ENCODE measurements at regions of chr2 and their contacts with region 1.

Region 1: GRCh38 chr2:231612179-231613053 is 19.8 kb downstream of the TEX44 start:
- DNase-seq: peak; percentile 89

Region 2: GRCh38 chr2:231452799-231453508 is 159.5 kb before region 1 on chr2:
- CTCF ChIA-PET with region 1: no interaction called
- POLR2A ChIA-PET with region 1: no interaction called
- DNase-seq: no peak

Region 3: GRCh38 chr2:231557571-231558237 is 54.7 kb before region 1 on chr2:
- CTCF ChIA-PET with region 1: no interaction called
- POLR2A ChIA-PET with region 1: no interaction called
- DNase-seq: peak; percentile 86

Region 4: DNA sequence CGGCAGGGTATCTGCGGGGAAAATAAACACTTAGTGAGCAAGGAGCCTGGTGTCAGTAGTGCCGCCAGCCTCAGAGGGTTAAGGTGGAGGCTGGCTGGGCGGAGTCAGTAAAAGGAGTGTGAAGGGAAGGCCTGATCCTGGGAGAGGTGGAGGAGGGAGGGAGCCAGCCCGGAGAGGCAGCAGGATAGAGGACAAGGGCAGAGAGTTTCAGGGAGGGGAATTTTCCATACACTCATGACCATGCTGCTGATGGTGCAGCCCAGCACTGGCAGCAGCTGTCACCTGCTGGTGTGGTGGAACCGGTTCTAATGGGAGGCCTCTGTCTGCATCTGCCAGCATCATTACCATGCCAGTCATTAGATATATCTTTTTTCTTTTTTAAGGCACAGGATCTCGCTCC is 21.8 kb before region 1 on chr2:
- CTCF ChIA-PET with region 1: no interaction called
- POLR2A ChIA-PET with region 1: no interaction called
- DNase-seq: no peak

Region 5: GRCh38 chr2:231601349-231602229 is 10.8 kb before region 1 on chr2:
- CTCF ChIA-PET with region 1: interaction called, 11 read pairs
- POLR2A ChIA-PET with region 1: interaction called, 9 read pairs
- DNase-seq: peak; percentile 77

Region 6: DNA sequence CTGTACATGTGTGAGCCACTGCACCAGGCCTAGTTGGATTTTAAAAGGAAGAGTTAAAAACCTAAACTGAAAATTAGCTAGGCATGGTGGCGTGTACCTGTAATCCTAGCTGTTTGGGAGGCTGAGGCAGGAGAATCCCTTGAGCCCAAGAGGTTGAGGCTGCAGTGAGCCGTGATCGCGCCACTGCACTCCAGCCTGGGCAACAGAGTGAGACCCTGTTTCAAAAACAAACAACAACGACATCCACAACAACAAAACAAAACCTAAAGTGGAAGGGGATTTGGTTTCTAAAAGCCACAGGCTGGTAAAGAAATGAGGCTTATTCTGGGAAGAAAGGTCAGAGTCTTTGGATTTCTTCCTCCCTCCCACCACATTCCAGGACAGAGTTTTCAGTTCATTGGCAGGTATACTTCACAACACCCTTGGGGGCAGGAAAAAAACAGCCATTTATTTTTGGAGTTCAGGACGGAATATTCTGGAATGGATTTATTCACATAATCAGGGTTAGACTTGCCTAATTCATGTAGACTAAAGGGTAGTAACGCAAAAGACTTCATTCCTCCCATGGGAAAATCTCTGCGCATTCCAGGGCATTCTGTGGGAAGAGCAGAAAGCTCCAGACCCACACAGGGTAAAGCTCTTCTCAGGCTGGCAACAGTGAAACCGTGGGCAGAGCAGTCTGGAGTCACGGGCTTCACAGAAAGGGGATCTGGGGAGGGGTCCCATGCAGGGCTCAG is 15.1 kb after region 1 on chr2:
- CTCF ChIA-PET with region 1: interaction called, 4 read pairs
- POLR2A ChIA-PET with region 1: interaction called, 16 read pairs
- DNase-seq: no peak

Region 7: GRCh38 chr2:231642631-231643494 is 30.4 kb after region 1 on chr2:
- CTCF ChIA-PET with region 1: no interaction called
- POLR2A ChIA-PET with region 1: interaction called, 10 read pairs
- DNase-seq: peak; percentile 46

Region 8: GRCh38 chr2:231674587-231675338 is 62.3 kb after region 1 on chr2:
- CTCF ChIA-PET with region 1: interaction called, 37 read pairs
- POLR2A ChIA-PET with region 1: interaction called, 44 read pairs
- DNase-seq: peak; percentile 56

Region 9: DNA sequence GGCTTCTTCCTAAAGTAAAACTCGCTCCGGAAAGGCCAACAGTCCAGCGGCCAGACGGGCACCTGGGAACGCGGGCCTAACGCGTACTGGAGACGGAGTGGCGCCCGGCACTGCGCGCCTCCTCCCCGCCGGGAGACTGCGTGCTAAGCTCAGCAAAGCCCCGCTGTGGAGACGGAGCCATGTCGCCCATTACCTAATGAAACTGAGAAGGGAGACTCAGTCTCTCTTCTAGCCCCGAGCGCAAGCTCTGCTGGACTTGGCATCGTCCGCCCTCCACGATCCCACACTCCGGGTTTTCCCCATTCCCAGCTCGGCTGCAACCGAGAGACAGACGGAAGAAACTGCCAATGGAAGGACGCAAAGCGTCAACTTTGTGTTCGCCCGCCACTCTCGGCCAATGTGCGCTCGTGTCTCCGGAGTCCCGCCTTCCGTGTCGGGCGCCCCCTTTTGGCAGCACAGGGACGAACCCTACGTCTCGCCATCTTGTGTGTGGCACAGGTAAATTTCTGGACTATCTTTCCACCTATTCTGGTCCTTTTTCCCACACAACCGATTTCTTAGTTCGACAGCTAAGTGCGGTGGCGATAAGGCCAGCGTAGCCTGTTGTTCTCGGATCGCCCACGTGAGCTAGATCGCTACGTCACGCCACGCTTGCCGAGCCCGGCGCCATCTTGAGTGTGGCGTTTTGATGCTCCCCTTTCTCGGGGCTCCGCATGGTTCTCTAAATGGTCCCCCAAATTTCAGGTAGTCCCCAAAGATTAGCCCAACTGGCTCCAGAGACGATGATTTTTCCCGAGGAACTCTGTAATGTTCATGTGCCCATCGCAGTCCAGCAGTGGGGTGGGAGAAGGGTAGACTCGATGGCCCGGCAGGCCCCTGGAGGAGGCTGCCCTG is 94.6 kb after region 1 on chr2:
- CTCF ChIA-PET with region 1: interaction called, 4 read pairs
- POLR2A ChIA-PET with region 1: interaction called, 20 read pairs
- DNase-seq: peak; percentile 85

Region 10: DNA sequence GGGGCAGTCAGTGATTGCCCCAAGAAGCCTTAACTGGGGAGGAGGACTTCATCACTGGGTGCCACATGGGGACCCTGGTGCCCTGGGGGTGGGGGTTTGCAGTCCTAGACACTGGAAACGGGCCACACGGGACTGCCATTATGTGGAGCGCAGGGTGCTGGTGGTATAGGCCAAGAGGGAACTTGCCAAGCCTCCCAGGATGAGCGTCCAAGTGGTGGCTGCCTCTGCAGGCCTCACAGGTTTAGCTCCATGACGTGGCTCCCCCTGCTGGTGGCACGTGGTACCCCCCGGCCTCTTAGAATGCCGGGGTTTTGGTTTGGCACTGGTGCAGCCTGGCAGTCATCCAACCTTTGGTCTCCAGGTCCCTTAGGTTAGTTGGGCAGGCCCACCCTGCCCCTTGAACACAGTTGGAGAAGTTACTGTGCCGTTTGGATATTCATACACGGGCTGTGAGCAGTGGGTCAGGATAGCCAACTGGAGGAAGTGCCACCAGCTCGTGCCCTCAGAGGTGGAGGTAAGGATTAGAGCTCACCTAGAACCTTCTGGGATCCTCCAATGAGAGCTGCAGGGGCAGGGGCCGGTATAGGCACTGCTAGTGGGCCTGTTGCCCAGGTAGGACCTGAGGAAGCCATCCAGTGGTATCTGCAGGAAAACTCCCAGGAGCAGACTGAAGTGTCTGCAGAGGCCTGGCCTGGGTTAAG is 101.5 kb after region 1 on chr2:
- CTCF ChIA-PET with region 1: interaction called, 23 read pairs
- POLR2A ChIA-PET with region 1: interaction called, 20 read pairs
- DNase-seq: peak; percentile 77